ENCODE measurements at regions of chr3 and their contacts with region 1.

Region 1: DNA sequence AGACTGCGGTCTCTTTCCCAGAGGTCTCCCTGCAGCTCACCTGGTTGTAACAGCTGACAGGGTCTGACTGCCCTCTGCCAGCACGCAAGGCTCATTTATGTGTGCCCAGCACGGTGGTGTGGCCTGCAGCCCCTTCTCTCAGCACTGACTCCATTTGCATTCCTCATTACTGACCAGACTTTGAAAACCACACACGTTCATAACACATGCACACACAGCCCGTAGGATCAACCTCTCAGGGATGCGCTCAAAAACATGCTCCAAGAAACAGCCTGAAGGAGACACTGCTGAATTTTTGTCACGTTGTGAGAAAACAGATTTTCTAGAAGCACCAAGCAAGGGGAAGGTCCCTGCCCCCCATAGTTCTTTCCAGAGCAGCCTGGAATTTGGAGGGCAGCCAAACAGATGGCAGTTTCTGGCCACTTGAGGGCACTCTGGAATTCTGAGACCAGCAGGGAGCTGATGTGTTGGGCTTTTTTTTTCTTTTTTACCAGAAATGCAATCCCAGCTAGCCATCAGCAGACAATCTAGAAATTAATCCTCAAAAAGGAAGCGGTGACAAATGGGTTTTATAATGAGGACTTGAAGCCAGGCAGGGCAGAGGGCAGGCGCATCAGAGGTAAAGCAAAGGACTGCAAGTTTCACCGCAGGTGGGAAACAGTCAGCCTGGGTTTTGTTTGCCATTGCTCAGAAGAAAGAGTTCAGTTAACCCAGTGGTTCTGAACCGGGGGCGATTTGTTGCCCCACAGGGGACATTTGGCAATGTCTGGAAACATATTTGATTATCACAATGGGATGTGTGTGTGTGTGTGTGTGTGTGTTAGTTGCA is 170.5 kb upstream of the PROK2 start:
- DNase-seq: peak; percentile 59 to 82
- ATAC-seq: peak; percentile 34 to 85 (median 75)
- H3K4me3 ChIP-seq: no peak overlapping the region
- H3K27ac ChIP-seq: no peak overlapping the region
- H3K4me1 ChIP-seq: peaks cover 0 to 13% (median 7%) of the 10 kb centered on the region in 9 donors
- H3K27me3 ChIP-seq: peaks cover 0 to 4% (median 0%) of the 10 kb centered on the region in 7 donors
- CTCF ChIP-seq: peak; percentile 42 to 84 (median 72)

Region 2: GRCh38 chr3:71875461-71875947 is 80.0 kb before region 1 on chr3:
- intact Hi-C with region 1: loop called in 1 of 10 experiments (anchors 10 kb)
- DNase-seq: peak; percentile 61 to 72
- ATAC-seq: peak; percentile 83 to 97 (median 90)
- H3K4me3 ChIP-seq: no peak overlapping the region
- H3K27ac ChIP-seq: no peak overlapping the region
- H3K4me1 ChIP-seq: peaks cover 0 to 8% (median 0%) of the 10 kb centered on the region in 9 donors
- H3K27me3 ChIP-seq: peaks cover 0 to 12% (median 2%) of the 10 kb centered on the region in 7 donors
- CTCF ChIP-seq: peak; percentile 67 to 94 (median 88)

Measured in heart right ventricle (tissue), 16 donors.